ENCODE measurements at regions of chr14 and their contacts with region 1.

Region 1: DNA sequence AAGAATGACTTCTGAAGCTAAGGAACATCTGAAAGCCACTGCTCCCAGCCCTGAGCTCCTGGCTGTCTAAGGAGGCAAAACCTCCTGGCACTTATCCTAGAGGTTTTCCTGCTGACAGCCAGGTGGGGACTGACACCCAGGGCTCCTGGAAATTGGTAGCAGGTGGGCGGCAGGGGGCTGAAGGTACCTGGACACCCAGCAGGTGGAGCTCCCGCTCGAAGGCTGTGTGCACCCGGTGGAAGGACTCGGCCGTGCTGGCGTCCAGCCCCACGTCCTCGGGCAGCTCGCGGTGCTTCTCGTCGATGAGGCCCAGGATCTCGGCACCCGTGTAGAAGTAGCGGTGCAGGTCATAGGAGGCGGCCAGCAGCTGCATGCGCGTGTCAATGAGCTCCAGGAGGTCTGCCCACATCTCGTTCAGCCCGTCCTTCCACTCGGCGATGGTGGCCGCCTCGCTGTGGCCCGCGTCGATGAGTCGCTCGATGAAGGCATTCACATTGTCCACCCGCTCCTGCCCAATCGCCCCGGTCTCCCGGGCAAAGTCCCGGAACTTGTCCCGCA is 68.2 kb downstream of the PLEKHG3 start:
- DNase-seq: no peak
- ATAC-seq: no peak
- H3K4me3 ChIP-seq: no peak overlapping the region
- H3K27ac ChIP-seq: no peak overlapping the region
- H3K4me1 ChIP-seq: no peaks in the 10 kb centered on the region
- H3K27me3 ChIP-seq: no peaks in the 10 kb centered on the region
- CTCF ChIP-seq: peak in 1 of 4 donors; percentile 9
- POLR2A ChIP-seq: no peak

Region 2: DNA sequence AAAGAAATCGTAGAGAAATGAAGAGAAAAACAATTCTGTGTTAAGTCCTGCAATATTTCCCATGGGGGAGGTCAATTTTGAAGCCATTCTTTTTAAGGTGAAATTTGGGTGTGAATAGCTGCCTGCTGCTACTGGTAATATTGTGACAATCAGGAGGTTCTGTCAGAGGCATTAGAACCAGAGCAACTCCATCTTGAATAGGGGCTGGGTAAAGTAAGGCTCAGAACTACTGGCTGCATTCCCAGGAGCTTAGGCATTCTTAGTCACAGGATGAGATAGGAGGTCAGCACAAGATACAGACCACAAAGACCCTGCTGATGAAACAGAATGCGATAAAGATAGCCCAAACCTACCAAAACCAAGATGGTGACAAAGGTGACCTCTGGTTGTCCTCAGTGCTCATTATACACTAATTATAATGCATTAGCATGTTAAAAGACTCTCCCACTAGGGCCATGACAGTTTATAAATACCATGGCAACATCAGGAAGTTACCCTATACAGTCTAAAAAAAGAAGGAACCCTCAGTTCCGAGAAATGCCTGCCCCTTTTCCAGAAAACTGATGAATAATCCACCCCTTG is 409.1 kb before region 1 on chr14:
- intact Hi-C with region 1: no loop called
- DNase-seq: no peak
- ATAC-seq: no peak
- H3K4me3 ChIP-seq: no peak overlapping the region
- H3K27ac ChIP-seq: no peak overlapping the region
- H3K4me1 ChIP-seq: no peaks in the 10 kb centered on the region
- H3K27me3 ChIP-seq: no peaks in the 10 kb centered on the region
- CTCF ChIP-seq: no peak
- POLR2A ChIP-seq: no peak

Region 3: GRCh38 chr14:64636208-64636979 is 136.1 kb before region 1 on chr14:
- intact Hi-C with region 1: no loop called
- DNase-seq: peak; percentile 60 to 80 (median 76)
- ATAC-seq: peak; percentile 80 to 86 (median 84)
- H3K4me3 ChIP-seq: no peak overlapping the region
- H3K27ac ChIP-seq: peak overlapping the region in 2 of 3 donors; percentile 80
- H3K4me1 ChIP-seq: peaks cover 0 to 37% (median 17%) of the 10 kb centered on the region in 4 donors
- H3K27me3 ChIP-seq: no peaks in the 10 kb centered on the region
- CTCF ChIP-seq: peak; percentile 80 to 93 (median 88)
- POLR2A ChIP-seq: no peak

Region 4: DNA sequence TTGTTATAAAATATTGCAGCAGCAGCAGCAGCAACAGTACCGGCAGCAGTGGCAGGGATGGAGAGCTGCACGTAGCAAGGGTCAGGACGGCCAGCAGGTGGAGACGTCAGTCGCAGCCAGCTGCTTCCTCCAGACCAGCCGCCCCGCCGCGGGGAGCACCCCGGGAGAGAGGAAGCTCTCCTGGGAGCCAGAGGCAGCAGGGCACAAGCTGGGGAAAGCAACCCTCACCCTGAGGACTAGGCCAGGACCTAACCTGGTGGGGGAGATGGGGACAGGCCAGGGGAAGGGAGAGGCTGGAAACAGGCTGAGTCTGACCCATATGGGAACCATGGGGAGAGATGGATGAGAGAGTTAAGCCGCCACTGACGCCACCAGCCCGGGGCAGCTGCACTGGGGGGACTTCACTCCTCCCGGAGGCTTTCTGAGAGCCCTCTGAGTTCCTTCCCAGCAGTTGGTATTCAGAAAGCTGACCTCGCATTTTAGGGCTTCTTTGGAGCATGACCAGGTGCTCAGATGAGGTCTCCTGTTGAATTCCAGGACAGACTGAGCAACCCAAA is 50.9 kb after region 1 on chr14:
- intact Hi-C with region 1: no loop called
- DNase-seq: peak; percentile 80 to 85 (median 83)
- ATAC-seq: peak; percentile 95 to 99 (median 98)
- H3K4me3 ChIP-seq: no peak overlapping the region
- H3K27ac ChIP-seq: no peak overlapping the region
- H3K4me1 ChIP-seq: no peaks in the 10 kb centered on the region
- H3K27me3 ChIP-seq: no peaks in the 10 kb centered on the region
- CTCF ChIP-seq: peak; percentile 76 to 86 (median 82)
- POLR2A ChIP-seq: no peak

Region 5: GRCh38 chr14:64879635-64880220 is 107.3 kb after region 1 on chr14 and contains the start of gene SPTB:
- intact Hi-C with region 1: loop called in 1 of 2 experiments (anchors 10 kb)
- DNase-seq: peak; percentile 60 to 82 (median 64)
- ATAC-seq: peak; percentile 74 to 94 (median 89)
- H3K4me3 ChIP-seq: peak within 1 kb of the TSS; percentile 50 to 56 (median 53)
- H3K27ac ChIP-seq: no peak within 1 kb of the TSS
- H3K4me1 ChIP-seq: peaks cover 0 to 13% (median 0%) of the 10 kb centered on the region in 4 donors
- H3K27me3 ChIP-seq: no peaks in the 10 kb centered on the region
- CTCF ChIP-seq: no peak
- POLR2A ChIP-seq: no peak
- total RNA-seq, gene SPTB: 0.12 to 2.4 (median 0.72) TPM

Measured in right lobe of liver (tissue), 6 donors.